ENCODE measurements at regions of chr3 and their contacts with region 1.

Region 1: DNA sequence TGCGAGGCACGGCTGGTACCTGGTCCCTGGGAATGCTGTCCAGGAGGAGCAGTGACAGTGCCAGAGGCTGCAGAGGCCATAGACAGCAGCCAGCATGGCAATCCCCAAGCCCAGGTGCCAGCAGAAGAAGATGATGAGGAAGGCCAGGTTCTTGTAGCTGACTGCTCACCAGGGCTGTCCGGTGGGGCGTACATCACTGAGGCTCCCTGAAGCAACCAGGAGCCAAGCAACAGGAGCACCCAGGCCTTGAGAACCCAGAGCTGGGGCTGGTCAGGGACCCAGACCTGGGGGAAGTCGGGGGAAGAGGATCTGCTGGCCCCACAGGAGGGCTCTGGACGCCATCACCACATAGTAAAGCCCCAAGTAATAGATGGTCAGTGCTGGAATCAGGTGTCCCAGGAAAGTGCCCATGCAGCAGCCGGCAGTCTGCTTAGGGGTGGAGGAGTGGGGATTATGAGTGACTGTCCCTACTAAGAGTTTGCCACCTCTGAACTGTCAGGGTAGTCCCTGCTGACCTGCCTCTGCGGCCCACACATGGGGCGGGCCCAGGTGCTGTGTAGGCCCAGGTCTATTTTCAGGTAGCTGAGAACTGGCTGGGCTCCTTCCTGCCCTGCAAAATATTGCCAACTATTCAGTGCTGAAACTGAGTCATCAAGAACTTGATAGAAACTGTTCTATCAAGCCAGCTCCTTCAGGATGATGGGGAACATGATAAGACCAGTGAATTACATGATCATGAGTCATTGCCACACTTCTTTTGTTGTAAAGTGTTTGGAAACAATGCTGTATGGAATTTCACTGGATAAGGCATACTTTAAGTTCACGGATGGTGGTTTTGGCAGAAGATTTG is 68.7 kb downstream of the CHRD start:
- DNase-seq: peak; percentile 48
- H3K4me3 ChIP-seq: no peak overlapping the region
- H3K27ac ChIP-seq: no peak overlapping the region
- H3K4me1 ChIP-seq: no peaks in the 10 kb centered on the region
- H3K27me3 ChIP-seq: no peaks in the 10 kb centered on the region
- CTCF ChIP-seq: no peak

Region 2: GRCh38 chr3:184417619-184418327 is 30.8 kb before region 1 on chr3:
- CTCF ChIA-PET with region 1: interaction called, 11 read pairs
- POLR2A ChIA-PET with region 1: no interaction called
- intact Hi-C with region 1: no loop called
- DNase-seq: peak; percentile 78
- H3K4me3 ChIP-seq: no peak overlapping the region
- H3K27ac ChIP-seq: no peak overlapping the region
- H3K4me1 ChIP-seq: peaks cover 10% of the 10 kb centered on the region
- H3K27me3 ChIP-seq: no peaks in the 10 kb centered on the region
- CTCF ChIP-seq: peak; percentile 91